ENCODE measurements at regions of chr1 and their contacts with region 1.

Region 1: DNA sequence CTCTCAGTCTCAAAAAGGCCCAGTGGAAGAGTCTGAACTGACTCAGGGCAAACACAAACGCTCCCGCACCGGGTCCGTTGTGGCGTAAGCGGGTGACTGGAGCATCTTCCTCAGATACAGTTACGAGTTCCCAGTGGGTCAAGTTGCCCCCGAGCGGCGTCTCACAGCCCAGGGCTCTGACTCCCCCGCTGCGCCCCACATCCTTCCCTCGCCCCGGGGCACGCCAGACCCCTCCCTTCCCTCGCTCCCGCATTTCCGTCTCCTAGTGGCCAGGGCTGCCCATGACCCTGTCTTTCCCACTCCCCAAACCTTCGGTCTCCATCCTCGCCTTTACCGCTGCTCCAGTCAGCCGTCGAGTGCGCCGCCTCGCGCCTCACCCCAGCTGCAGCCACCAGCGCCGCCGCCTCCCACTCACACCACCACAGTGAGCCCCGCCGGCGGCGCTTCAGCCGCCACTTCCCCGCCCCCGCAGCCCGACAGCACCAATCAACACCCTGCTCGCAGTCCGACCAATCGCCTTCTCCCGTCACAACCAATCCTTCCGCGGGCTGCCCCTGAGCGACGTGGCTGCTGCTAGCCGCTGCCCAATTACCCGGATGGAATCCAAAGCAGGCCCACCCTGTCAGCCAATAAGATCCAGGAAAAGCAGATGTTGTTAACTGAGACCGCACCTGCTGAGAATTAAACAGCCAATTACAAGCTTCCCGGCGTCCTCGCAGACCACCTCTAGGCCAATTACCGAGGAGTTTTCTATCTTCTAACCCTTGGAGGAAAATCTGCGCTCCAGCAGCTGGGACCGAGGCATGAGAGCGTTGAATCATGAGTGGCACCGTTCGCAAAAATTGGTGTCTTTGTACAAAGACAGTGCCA is at the start of gene TDRKH:
- DNase-seq: peak; percentile 99
- ATAC-seq: peak; percentile 93
- H3K4me3 ChIP-seq: peak within 1 kb of the TSS; percentile 72 to 97 (median 91)
- H3K4me3 Mint-ChIP-seq: peak within 1 kb of the TSS; percentile 96
- H3K27ac ChIP-seq: peak within 1 kb of the TSS; percentile 15 to 67
- H3K27ac Mint-ChIP-seq: peak within 1 kb of the TSS; percentile 89
- H3K4me1 ChIP-seq: peaks cover 9 to 10% of the 10 kb centered on the region in 2 donors
- H3K4me1 Mint-ChIP-seq: peaks cover 26% of the 10 kb centered on the region
- H3K27me3 ChIP-seq: no peaks in the 10 kb centered on the region
- H3K27me3 Mint-ChIP-seq: no peaks in the 10 kb centered on the region
- CTCF ChIP-seq: peak; percentile 14
- total RNA-seq, gene TDRKH: 12.8 and 13.3 TPM in 2 replicates

Region 2: DNA sequence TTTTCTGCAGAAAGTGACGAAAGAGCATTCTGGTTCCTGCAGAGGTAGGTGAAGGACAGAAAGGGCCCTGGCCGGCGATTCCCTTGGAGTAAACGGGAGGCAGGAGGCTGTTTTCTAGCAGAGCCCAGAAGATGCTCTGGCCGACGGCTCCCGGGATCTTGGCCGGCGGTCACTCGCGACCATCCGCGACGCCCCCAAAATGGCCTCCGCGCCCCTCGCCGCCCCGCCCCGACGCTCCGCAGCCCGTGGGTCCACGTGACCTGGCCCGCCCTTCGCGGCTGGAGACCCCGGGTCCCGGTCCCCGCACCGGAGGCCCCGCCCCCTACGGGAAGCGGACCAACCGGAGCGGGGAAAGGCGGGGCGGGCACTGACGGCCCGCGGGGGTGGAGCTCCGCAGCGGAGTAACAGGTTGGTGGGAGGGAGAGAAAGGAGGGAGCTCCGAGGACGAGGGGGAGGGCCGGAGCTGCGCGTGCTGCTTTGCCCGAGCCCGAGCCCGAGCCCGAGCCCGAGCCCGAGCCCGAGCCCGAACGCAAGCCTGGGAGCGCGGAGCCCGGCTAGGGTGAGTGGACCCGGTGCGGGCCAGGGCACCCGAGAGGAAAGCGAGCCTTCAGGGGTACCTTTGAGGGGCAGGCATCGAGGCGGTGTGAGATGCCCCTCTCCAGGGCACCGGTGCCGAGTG is 279.2 kb before region 1 on chr1 and contains the start of gene CGN:
- CTCF ChIA-PET with region 1: no interaction called
- POLR2A ChIA-PET with region 1: no interaction called
- intact Hi-C with region 1: loop called (anchors 1 kb)
- DNase-seq: peak; percentile 87
- ATAC-seq: peak; percentile 98
- H3K4me3 ChIP-seq: peak within 1 kb of the TSS; percentile 66 to 85 (median 77)
- H3K4me3 Mint-ChIP-seq: peak within 1 kb of the TSS; percentile 96
- H3K27ac ChIP-seq: no peak within 1 kb of the TSS
- H3K27ac Mint-ChIP-seq: peak within 1 kb of the TSS; percentile 78
- H3K4me1 ChIP-seq: peaks cover 16 to 23% of the 10 kb centered on the region in 2 donors
- H3K4me1 Mint-ChIP-seq: peaks cover 15% of the 10 kb centered on the region
- H3K27me3 ChIP-seq: peaks cover 0 to 12% (median 2%) of the 10 kb centered on the region in 4 experiments
- H3K27me3 Mint-ChIP-seq: no peaks in the 10 kb centered on the region
- CTCF ChIP-seq: no peak
- total RNA-seq, gene CGN: 0.49 and 0.81 TPM in 2 replicates

Region 3: GRCh38 chr1:151611832-151612500 is 178.3 kb before region 1 on chr1 and contains the start of gene SNX27:
- CTCF ChIA-PET with region 1: no interaction called
- POLR2A ChIA-PET with region 1: interaction called, 4 read pairs
- intact Hi-C with region 1: loop called (anchors 1 kb)
- DNase-seq: peak; percentile 94
- ATAC-seq: peak; percentile 96
- H3K4me3 ChIP-seq: peak within 1 kb of the TSS; percentile 52 to 94 (median 84)
- H3K4me3 Mint-ChIP-seq: peak within 1 kb of the TSS; percentile 91
- H3K27ac ChIP-seq: peak within 1 kb of the TSS in 1 of 2 donors; percentile 79
- H3K27ac Mint-ChIP-seq: peak within 1 kb of the TSS; percentile 94
- H3K4me1 ChIP-seq: peaks cover 11 to 18% of the 10 kb centered on the region in 2 donors
- H3K4me1 Mint-ChIP-seq: peaks cover 32% of the 10 kb centered on the region
- H3K27me3 ChIP-seq: peaks cover 0 to 3% (median 1%) of the 10 kb centered on the region in 4 experiments
- H3K27me3 Mint-ChIP-seq: peaks cover 5% of the 10 kb centered on the region
- CTCF ChIP-seq: no peak
- total RNA-seq, gene SNX27: 43.2 and 45.6 TPM in 2 replicates

Region 4: DNA sequence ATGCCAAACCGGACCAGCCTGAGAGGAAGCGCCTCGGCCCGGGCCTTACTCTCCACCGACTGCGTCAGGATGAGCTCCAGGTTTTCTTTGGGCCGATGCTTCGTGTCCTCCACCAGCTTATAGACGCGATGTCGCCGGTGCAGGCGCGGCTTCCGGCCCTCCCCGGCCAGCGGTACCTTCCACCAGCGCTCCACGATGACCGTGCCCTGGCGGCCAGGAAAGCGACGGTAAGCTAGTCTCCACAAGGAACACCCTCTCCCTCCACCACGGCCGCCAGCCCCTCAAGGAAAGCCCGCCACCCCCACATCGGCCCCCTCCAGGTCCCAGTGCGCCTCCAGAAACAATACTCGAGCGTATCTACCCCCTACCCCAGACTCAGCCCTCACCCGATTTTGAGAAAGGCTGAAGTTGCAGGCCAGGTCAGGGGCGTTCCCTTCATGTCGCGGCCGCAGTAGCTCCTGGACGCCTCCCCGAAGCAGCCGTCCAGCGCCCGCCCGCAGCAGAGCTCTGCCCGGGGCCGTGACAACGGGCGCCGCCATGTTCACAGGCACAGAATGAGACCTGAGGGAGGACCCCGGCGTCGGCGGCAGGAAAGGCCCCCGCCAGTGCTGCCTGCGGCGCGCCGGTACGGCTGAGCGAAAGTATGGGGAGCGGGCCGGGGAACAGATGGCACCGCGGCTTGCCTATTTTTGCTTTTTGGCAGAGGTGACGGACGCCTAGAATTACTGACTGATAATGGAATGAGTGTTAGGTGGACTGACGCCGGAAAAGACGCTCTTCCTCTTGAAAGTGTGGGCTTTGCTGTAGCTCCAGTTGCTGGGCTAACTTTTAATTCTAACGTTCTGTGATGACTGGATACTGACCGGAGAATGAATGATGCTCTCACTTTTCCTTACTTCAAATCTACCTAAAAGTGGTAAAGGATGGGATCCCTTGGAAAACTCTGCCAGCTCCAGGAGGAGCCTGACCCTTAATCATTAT is 27.1 kb before region 1 on chr1 and contains the start of gene MRPL9:
- CTCF ChIA-PET with region 1: interaction called, 11 read pairs
- POLR2A ChIA-PET with region 1: interaction called, 13 read pairs
- intact Hi-C with region 1: loop called (anchors 1 kb)
- DNase-seq: peak; percentile 87
- ATAC-seq: peak; percentile 99
- H3K4me3 ChIP-seq: peak within 1 kb of the TSS; percentile 60 to 85 (median 81)
- H3K4me3 Mint-ChIP-seq: peak within 1 kb of the TSS; percentile 88
- H3K27ac ChIP-seq: peak within 1 kb of the TSS; percentile 74 to 93
- H3K27ac Mint-ChIP-seq: peak within 1 kb of the TSS; percentile 87
- H3K4me1 ChIP-seq: peaks cover 14 to 15% of the 10 kb centered on the region in 2 donors
- H3K4me1 Mint-ChIP-seq: peaks cover 21% of the 10 kb centered on the region
- H3K27me3 ChIP-seq: no peaks in the 10 kb centered on the region
- H3K27me3 Mint-ChIP-seq: no peaks in the 10 kb centered on the region
- CTCF ChIP-seq: no peak
- total RNA-seq, gene MRPL9: 84.6 and 100 TPM in 2 replicates

Region 5: GRCh38 chr1:151867785-151868411 is 77.6 kb after region 1 on chr1:
- CTCF ChIA-PET with region 1: no interaction called
- POLR2A ChIA-PET with region 1: no interaction called
- intact Hi-C with region 1: no loop called
- DNase-seq: no peak
- ATAC-seq: no peak
- H3K4me3 ChIP-seq: no peak overlapping the region
- H3K4me3 Mint-ChIP-seq: no peak overlapping the region
- H3K27ac ChIP-seq: no peak overlapping the region
- H3K27ac Mint-ChIP-seq: no peak overlapping the region
- H3K4me1 ChIP-seq: no peaks in the 10 kb centered on the region
- H3K4me1 Mint-ChIP-seq: no peaks in the 10 kb centered on the region
- H3K27me3 ChIP-seq: no peaks in the 10 kb centered on the region
- H3K27me3 Mint-ChIP-seq: peaks cover 16% of the 10 kb centered on the region
- CTCF ChIP-seq: no peak

Region 6: DNA sequence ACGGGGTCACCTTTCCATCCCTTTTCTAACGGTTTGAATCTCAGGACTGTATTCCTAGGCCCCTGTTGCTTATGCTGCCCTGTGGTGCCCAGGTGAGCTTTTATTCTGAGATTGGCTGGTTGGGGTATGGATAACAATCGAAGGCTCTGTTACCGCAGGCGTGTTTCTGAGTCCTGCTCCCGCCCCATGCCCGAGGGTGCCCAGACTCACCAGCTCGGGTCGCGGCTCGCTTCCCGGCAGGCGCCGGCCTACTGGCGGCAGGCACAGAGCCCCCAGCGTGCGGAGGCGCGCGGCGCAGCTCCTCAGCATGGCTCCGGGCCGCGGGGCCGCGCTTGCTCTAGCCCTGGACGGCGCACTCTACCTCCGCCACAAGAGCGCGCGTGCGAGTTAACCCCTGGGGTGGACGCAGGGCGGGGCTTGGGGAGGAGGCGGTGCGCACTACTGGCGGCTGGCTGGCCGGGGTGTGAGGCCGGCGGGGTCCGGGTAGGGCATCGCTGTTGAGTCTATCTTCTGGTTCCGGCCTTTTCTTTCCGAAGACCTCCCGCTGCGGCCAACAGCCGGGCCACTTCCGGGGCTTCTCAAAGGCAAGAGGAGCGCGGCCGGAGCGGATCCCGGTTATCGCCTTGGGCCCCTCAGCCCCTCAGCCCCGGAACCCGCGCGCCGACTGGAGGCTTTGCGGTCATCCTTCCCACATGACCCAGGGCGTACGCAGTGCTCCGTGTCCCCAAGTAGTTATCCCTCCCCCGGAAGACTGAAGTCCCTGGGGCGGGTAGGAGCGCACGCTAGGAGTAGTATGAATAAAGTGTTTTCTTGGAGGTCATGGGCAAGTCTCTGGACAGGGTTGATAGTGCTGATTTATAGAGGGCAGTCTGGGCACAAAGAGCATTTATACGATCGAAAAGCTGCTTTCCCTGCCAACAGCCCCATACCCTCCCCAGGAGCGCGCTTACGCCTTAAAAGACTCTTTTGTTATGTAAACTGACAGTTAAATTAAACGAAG is 119.1 kb after region 1 on chr1 and contains the start of gene THEM4:
- CTCF ChIA-PET with region 1: no interaction called
- POLR2A ChIA-PET with region 1: no interaction called
- intact Hi-C with region 1: loop called (anchors 2 kb)
- DNase-seq: peak; percentile 92
- ATAC-seq: peak; percentile 99
- H3K4me3 ChIP-seq: peak within 1 kb of the TSS; percentile 8 to 82 (median 70)
- H3K4me3 Mint-ChIP-seq: peak within 1 kb of the TSS; percentile 92
- H3K27ac ChIP-seq: peak within 1 kb of the TSS; percentile 54 to 70
- H3K27ac Mint-ChIP-seq: peak within 1 kb of the TSS; percentile 86
- H3K4me1 ChIP-seq: peaks cover 7 to 17% of the 10 kb centered on the region in 2 donors
- H3K4me1 Mint-ChIP-seq: peaks cover 11% of the 10 kb centered on the region
- H3K27me3 ChIP-seq: no peaks in the 10 kb centered on the region
- H3K27me3 Mint-ChIP-seq: no peaks in the 10 kb centered on the region
- CTCF ChIP-seq: peak; percentile 20
- total RNA-seq, gene THEM4: 16.1 and 19.8 TPM in 2 replicates

Measured in B cell (primary cell).